ENCODE measurements at regions of chr2 and their contacts with region 1.

Region 1: DNA sequence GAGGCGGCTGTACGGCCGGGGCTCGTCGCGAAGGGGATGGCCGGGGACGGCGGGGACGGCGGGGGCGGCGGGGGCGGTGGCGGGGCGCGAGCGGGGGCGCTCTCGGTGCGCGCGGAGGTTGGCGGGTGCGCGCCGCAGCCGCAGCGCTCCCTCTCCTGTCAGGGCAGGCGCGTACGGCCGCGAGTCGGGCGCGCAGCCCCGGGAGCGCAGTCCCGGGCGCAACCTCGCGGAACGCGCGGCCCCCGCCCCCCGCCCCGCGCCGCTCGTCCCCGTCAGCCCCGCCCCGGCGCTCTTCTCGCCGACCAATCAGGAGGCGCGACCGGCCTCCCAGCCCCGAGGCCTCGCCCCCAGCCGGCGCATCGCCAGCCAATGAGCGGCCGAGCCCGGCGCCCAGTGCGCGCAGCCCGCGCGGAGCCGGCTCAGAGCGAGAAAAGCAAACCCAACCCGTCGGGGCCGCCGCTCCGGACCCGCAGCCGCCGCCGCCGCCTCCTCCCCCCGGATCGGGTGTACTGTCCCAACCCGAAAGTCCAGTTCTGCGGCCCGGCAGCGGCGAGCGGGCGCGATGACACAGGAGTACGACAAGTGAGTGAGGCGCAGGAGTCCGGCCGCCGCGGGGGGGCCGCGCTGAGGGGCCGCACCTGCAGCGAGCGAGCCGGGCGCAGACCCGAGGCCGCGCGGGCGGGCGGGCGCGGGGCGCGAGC is at the start of gene GRHL1:
- DNase-seq: peak; percentile 95
- ATAC-seq: peak; percentile 83
- H3K4me3 ChIP-seq: peak within 1 kb of the TSS; percentile 76
- H3K27ac ChIP-seq: no peak within 1 kb of the TSS
- H3K4me1 ChIP-seq: peaks cover 29% of the 10 kb centered on the region
- H3K27me3 ChIP-seq: no peaks in the 10 kb centered on the region
- CTCF ChIP-seq: no peak
- total RNA-seq, gene GRHL1: 9.3 and 10.3 TPM in 2 replicates

Region 2: GRCh38 chr2:9843229-9844035 is 108.0 kb before region 1 on chr2 and contains the start of gene TAF1B:
- CTCF ChIA-PET with region 1: no interaction called
- POLR2A ChIA-PET with region 1: no interaction called
- intact Hi-C with region 1: loop called (anchors 10 kb)
- DNase-seq: peak; percentile 96
- ATAC-seq: peak; percentile 78
- H3K4me3 ChIP-seq: peak within 1 kb of the TSS; percentile 75
- H3K27ac ChIP-seq: peak within 1 kb of the TSS; percentile 88
- H3K4me1 ChIP-seq: peaks cover 35% of the 10 kb centered on the region
- H3K27me3 ChIP-seq: no peaks in the 10 kb centered on the region
- CTCF ChIP-seq: 0 out of 2 replicates have a peak, but pooled peaks have one; percentile 30
- total RNA-seq, gene TAF1B: 24.1 and 39.5 TPM in 2 replicates

Region 3: DNA sequence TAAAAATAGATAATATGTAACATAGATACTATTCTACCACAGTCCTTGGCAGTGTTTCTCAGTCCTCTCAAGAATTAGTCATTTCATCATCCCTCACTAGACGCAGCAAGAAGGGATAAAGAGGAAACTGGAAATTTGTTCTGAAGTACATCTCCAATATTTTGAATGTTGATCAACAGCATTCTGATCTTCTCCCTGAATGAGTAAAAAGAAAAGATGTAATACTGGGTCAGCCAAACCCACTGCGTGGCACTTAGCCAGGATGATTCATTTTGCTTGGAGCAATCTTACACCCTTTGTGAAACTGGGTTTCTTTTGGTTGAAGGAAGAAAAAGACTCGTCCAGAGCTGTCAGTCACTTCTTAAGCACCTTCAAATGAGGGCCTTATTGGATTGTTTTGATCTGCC is 54.1 kb before region 1 on chr2:
- CTCF ChIA-PET with region 1: no interaction called
- POLR2A ChIA-PET with region 1: no interaction called
- intact Hi-C with region 1: loop called (anchors 5 kb)
- DNase-seq: peak; percentile 99
- ATAC-seq: peak; percentile 93
- H3K4me3 ChIP-seq: no peak overlapping the region
- H3K27ac ChIP-seq: peak overlapping the region; percentile 25
- H3K4me1 ChIP-seq: peaks cover 27% of the 10 kb centered on the region
- H3K27me3 ChIP-seq: no peaks in the 10 kb centered on the region
- CTCF ChIP-seq: no peak

Measured in PC-3 (cell line).